Ascending aorta (tissue), 2 donors: ENCODE measurements at regions of chr15 and their contacts with region 1.

Region 1: DNA sequence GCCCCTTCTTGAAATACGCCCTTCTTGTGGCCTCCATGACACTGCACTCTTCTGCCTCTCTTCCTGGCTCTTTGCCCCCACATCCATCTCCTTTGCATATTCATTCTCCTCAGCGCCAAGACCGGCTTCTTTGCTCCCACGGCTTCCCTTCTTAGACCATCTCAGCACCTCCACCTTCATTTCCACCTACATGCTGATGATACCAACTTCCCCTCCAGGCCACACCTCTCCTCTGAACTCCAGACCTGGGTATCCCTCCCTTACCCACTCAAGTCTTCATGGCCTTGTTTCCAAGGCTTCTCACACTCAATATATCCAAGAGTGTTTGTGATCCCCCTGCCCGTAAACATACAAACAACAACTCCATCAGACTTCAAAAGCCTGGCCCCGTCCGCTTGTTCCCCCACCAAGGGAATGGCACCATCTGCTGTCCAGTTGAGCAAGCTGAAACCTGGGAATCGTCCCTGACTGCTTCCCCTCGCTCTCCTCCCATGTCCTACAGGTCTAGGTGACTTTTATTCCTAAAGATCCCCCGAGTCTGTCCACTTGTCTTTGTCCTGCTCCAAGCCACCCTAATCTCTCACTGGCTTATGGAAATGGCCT is 27.8 kb upstream of the FAM174B start:
- DNase-seq: no peak
- H3K4me3 ChIP-seq: no peak overlapping the region
- H3K27ac ChIP-seq: no peak overlapping the region
- H3K4me1 ChIP-seq: peaks cover 0 to 2% of the 10 kb centered on the region in 2 donors
- H3K27me3 ChIP-seq: no peaks in the 10 kb centered on the region
- CTCF ChIP-seq: peak; percentile 26 to 59 (median 29)

Region 2: GRCh38 chr15:92521624-92522008 is 161.7 kb before region 1 on chr15:
- intact Hi-C with region 1: loop called (anchors 10 kb)
- DNase-seq: peak in 1 of 2 donors; percentile 87
- H3K4me3 ChIP-seq: no peak overlapping the region
- H3K27ac ChIP-seq: no peak overlapping the region
- H3K4me1 ChIP-seq: no peaks in the 10 kb centered on the region
- H3K27me3 ChIP-seq: no peaks in the 10 kb centered on the region
- CTCF ChIP-seq: peak; percentile 63 to 85 (median 76)

Region 3: DNA sequence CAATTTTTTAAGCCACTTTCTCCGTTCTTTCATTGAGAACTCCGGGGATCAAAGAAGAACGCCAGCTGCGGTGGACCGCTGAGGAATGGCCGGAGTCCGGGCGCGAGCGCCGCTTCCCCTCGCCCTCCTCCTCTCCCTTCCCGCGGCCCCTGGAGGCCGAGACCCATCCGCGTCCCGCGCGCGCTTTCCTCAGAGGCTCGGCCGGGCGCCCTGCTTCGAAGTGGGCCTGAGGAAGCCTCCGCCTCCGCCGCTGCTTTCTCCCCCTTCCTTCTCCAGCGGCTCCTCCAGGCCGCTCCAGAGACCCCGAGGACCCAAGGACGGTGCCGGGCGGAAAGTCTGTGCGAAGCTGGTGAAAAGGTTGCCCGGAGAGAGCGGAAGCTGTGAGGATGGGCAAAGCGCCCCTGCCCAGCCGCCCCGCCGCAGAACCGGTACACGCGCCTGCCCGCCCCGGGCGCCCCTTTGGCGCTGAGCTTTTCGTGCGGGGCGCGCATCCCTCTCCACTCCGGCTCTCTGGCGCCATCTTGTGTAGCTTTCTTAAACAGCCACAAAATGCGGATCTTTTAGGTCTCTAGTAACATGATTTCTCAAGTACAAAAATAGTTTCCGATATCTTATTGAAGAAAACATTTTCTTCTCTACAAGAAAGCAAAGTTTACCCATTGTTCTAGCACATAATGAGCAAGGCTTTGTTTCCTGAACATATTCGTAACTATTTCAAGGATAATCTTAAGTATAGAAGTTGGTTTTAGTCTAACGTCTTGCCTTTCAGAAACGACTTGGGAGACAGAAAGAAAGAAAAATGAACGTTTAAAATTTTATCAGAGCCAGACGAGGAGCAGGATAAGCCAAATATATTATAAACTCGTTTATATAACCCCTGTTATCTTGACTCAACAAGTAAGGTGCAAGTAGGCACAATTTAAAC is 31.4 kb after region 1 on chr15:
- intact Hi-C with region 1: no loop called
- DNase-seq: peak in 1 of 2 donors; percentile 80
- H3K4me3 ChIP-seq: peak overlapping the region; percentile 64 to 70
- H3K27ac ChIP-seq: peak overlapping the region; percentile 62 to 83
- H3K4me1 ChIP-seq: no peaks in the 10 kb centered on the region
- H3K27me3 ChIP-seq: no peaks in the 10 kb centered on the region
- CTCF ChIP-seq: peak; percentile 73 to 91 (median 77)

Region 4: DNA sequence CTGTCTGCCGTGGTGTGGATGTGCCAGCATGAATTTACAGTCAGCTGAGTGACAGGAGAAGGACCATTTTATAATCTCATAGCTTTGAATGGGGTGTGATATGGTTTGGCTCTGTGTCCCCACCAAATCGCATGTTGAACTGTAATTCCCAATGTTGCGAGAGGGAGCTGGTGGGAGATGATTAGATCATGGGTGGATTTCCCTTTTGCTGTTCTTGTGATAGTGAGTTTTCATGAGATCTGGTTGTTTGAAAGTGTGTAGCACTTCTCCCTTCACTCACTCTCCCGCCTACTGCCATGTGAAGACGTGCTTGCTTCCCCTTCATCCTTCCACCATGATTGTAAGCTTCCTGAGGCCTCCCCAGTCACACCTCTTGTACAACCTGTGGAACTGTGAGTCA is 104.9 kb after region 1 on chr15:
- intact Hi-C with region 1: no loop called
- DNase-seq: no peak
- H3K4me3 ChIP-seq: no peak overlapping the region
- H3K27ac ChIP-seq: no peak overlapping the region
- H3K4me1 ChIP-seq: no peaks in the 10 kb centered on the region
- H3K27me3 ChIP-seq: no peaks in the 10 kb centered on the region
- CTCF ChIP-seq: no peak